CD4-positive, alpha-beta memory T cell (primary cell): ENCODE measurements at regions of chr9 and their contacts with region 1.

Region 1: GRCh38 chr9:110048403-110048975 is 159.5 kb downstream of the C9orf152 start:
- DNase-seq: peak; percentile 62 to 78 (median 74)
- H3K4me3 ChIP-seq: peak overlapping the region; percentile 73 to 95
- H3K4me3 Mint-ChIP-seq: peak overlapping the region; percentile 88 to 94 (median 92)
- H3K27ac ChIP-seq: peak overlapping the region; percentile 34
- H3K27ac Mint-ChIP-seq: peak overlapping the region in 6 of 7 donors; percentile 3 to 81 (median 75)
- H3K4me1 ChIP-seq: peaks cover 27% of the 10 kb centered on the region
- H3K4me1 Mint-ChIP-seq: peaks cover 16 to 45% (median 37%) of the 10 kb centered on the region in 4 donors
- H3K27me3 ChIP-seq: no peaks in the 10 kb centered on the region
- H3K27me3 Mint-ChIP-seq: peaks cover 2 to 5% of the 10 kb centered on the region in 2 donors

Region 2: DNA sequence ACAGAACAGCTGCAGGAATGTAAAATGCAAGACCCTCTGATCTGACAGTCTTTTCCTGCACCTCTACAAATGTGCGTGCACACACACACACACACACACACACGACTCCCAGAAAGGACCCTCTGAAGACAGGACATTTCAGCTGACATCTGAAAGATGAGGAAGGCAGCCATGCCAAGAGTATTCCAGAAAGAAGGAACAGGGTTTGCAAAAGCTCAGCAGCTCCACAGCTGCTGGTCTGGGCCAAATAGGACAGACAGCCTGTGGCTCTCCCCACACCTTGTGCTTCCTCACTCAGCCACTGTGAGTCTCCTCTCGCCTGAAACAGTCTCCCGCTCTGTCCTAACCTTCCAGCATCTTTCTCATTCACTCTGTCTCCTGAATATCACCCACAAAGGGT is 79.5 kb before region 1 on chr9:
- CTCF ChIA-PET with region 1: interaction called, 3 read pairs
- POLR2A ChIA-PET with region 1: interaction called, 15 read pairs
- intact Hi-C with region 1: loop called (anchors 5 kb)
- DNase-seq: no peak
- H3K4me3 ChIP-seq: no peak overlapping the region
- H3K4me3 Mint-ChIP-seq: peak overlapping the region; percentile 5 to 73 (median 54)
- H3K27ac ChIP-seq: peak overlapping the region; percentile 47
- H3K27ac Mint-ChIP-seq: peak overlapping the region; percentile 82 to 96 (median 90)
- H3K4me1 ChIP-seq: peaks cover 43% of the 10 kb centered on the region
- H3K4me1 Mint-ChIP-seq: peaks cover 23 to 71% (median 50%) of the 10 kb centered on the region in 4 donors
- H3K27me3 ChIP-seq: no peaks in the 10 kb centered on the region
- H3K27me3 Mint-ChIP-seq: no peaks in the 10 kb centered on the region

Region 3: GRCh38 chr9:110007477-110008270 is 40.8 kb before region 1 on chr9:
- CTCF ChIA-PET with region 1: no interaction called
- POLR2A ChIA-PET with region 1: interaction called, 15 read pairs
- intact Hi-C with region 1: loop called (anchors 2 kb)
- DNase-seq: no peak
- H3K4me3 ChIP-seq: no peak overlapping the region
- H3K4me3 Mint-ChIP-seq: no peak overlapping the region
- H3K27ac ChIP-seq: no peak overlapping the region
- H3K27ac Mint-ChIP-seq: peak overlapping the region in 1 of 7 donors; percentile 18
- H3K4me1 ChIP-seq: peaks cover 15% of the 10 kb centered on the region
- H3K4me1 Mint-ChIP-seq: peaks cover 11 to 34% (median 23%) of the 10 kb centered on the region in 4 donors
- H3K27me3 ChIP-seq: no peaks in the 10 kb centered on the region
- H3K27me3 Mint-ChIP-seq: peaks cover 0 to 2% of the 10 kb centered on the region in 2 donors

Region 4: DNA sequence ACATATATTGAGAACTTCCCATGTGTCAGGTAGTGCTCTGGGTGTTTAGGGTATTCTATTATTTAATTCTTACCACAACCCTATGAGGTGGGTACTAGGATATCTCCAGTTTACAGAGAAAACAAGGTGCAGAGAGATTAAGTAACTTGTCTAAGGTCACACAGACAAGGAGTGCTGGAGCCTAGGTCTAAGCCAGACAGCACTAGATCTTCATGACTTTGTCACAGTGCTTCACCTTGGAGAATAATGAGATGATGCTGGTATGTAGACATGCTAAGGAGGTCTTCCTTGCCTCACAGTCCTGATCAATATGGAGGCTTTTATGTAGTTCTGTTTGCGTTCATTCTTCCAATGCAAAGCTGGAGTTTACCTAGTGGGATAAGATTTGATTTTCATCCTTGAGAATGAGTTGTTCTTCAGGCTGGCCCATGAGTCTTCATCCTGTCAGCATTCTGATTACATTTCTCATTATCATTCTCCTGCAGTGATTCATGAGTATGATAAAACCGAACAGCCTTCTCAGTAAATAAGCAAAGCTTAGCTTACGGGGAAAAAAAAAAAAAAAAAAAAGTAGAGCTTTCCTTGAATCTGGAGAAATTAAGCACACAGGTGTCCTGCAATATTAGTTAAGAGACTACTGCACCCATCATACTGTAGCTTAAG is 16.8 kb before region 1 on chr9:
- CTCF ChIA-PET with region 1: no interaction called
- POLR2A ChIA-PET with region 1: interaction called, 7 read pairs
- intact Hi-C with region 1: loop called (anchors 2 kb)
- DNase-seq: no peak
- H3K4me3 ChIP-seq: no peak overlapping the region
- H3K4me3 Mint-ChIP-seq: no peak overlapping the region
- H3K27ac ChIP-seq: no peak overlapping the region
- H3K27ac Mint-ChIP-seq: no peak overlapping the region
- H3K4me1 ChIP-seq: peaks cover 19% of the 10 kb centered on the region
- H3K4me1 Mint-ChIP-seq: peaks cover 11 to 19% (median 18%) of the 10 kb centered on the region in 4 donors
- H3K27me3 ChIP-seq: no peaks in the 10 kb centered on the region
- H3K27me3 Mint-ChIP-seq: no peaks in the 10 kb centered on the region

Region 5: GRCh38 chr9:110128664-110129329 is 80.3 kb after region 1 on chr9:
- CTCF ChIA-PET with region 1: no interaction called
- POLR2A ChIA-PET with region 1: no interaction called
- intact Hi-C with region 1: no loop called
- DNase-seq: no peak
- H3K4me3 ChIP-seq: no peak overlapping the region
- H3K4me3 Mint-ChIP-seq: no peak overlapping the region
- H3K27ac ChIP-seq: no peak overlapping the region
- H3K27ac Mint-ChIP-seq: no peak overlapping the region
- H3K4me1 ChIP-seq: no peaks in the 10 kb centered on the region
- H3K4me1 Mint-ChIP-seq: peaks cover 7 to 17% (median 15%) of the 10 kb centered on the region in 4 donors
- H3K27me3 ChIP-seq: no peaks in the 10 kb centered on the region
- H3K27me3 Mint-ChIP-seq: no peaks in the 10 kb centered on the region